ENCODE measurements at regions of chr11 and their contacts with region 1.

Region 1: DNA sequence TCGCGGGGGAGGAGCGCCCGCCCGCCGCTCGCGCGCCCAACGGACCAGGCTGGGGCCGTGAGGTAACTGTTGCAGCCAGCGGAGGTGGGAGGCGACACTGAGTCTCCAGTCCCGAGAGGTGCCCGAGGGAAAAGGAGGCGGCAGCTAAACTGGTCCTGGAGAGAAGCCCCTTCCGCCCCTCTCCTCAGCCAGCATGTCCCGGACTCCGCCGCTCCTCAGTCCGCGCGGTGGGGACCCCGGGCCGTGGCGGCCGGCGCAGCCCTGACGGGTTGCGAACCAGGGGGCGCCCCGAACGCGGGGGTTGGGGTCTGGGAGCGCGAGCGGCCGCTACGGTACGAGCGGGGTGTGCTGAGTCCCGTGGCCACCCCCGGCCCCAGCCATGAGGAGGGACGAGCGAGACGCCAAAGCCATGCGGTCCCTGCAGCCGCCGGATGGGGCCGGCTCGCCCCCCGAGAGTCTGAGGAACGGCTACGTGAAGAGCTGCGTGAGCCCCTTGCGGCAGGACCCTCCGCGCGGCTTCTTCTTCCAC is at the start of gene PDE3B:
- DNase-seq: peak; percentile 47 to 83 (median 68)
- ATAC-seq: peak; percentile 54 to 62
- H3K4me3 Mint-ChIP-seq: peak within 1 kb of the TSS; percentile 85 to 98 (median 90)
- H3K27ac Mint-ChIP-seq: peak within 1 kb of the TSS; percentile 85 to 98 (median 94)
- H3K4me1 Mint-ChIP-seq: peaks cover 24 to 47% (median 42%) of the 10 kb centered on the region in 4 donors
- H3K27me3 Mint-ChIP-seq: peaks cover 0 to 3% (median 0%) of the 10 kb centered on the region in 5 donors
- polyA plus RNA-seq, gene PDE3B: 59.2 to 127 (median 74.8) TPM

Region 2: GRCh38 chr11:14435717-14436512 is 207.8 kb before region 1 on chr11:
- POLR2A ChIA-PET with region 1: no interaction called
- DNase-seq: peak in 1 of 10 donors; percentile 15
- ATAC-seq: no peak
- H3K4me3 Mint-ChIP-seq: no peak overlapping the region
- H3K27ac Mint-ChIP-seq: peak overlapping the region in 2 of 10 donors; percentile 19 to 40
- H3K4me1 Mint-ChIP-seq: peaks cover 17 to 42% (median 28%) of the 10 kb centered on the region in 4 donors
- H3K27me3 Mint-ChIP-seq: no peaks in the 10 kb centered on the region

Region 3: GRCh38 chr11:14519917-14520746 is 123.6 kb before region 1 on chr11 and contains the start of gene PSMA1:
- POLR2A ChIA-PET with region 1: interaction called, 14 read pairs
- DNase-seq: peak; percentile 83 to 92 (median 88)
- ATAC-seq: peak; percentile 90 to 96
- H3K4me3 Mint-ChIP-seq: peak within 1 kb of the TSS; percentile 90 to 99 (median 96)
- H3K27ac Mint-ChIP-seq: peak within 1 kb of the TSS; percentile 92 to 98 (median 98)
- H3K4me1 Mint-ChIP-seq: peaks cover 11 to 38% (median 27%) of the 10 kb centered on the region in 4 donors
- H3K27me3 Mint-ChIP-seq: no peaks in the 10 kb centered on the region
- polyA plus RNA-seq, gene PSMA1: 154 to 159 (median 156) TPM

Region 4: GRCh38 chr11:14554959-14555358 is 88.8 kb before region 1 on chr11:
- POLR2A ChIA-PET with region 1: interaction called, 41 read pairs
- DNase-seq: peak in 8 of 10 donors; percentile 24 to 90 (median 74)
- ATAC-seq: peak; percentile 88 to 95
- H3K4me3 Mint-ChIP-seq: peak overlapping the region; percentile 10 to 77 (median 58)
- H3K27ac Mint-ChIP-seq: peak overlapping the region; percentile 88 to 98 (median 96)
- H3K4me1 Mint-ChIP-seq: peaks cover 35 to 49% (median 42%) of the 10 kb centered on the region in 4 donors
- H3K27me3 Mint-ChIP-seq: no peaks in the 10 kb centered on the region

Region 5: GRCh38 chr11:14619603-14620531 is 23.9 kb before region 1 on chr11:
- POLR2A ChIA-PET with region 1: interaction called, 44 read pairs
- DNase-seq: no peak
- ATAC-seq: no peak
- H3K4me3 Mint-ChIP-seq: peak overlapping the region in 2 of 10 donors; percentile 7 to 22
- H3K27ac Mint-ChIP-seq: peak overlapping the region in 7 of 10 donors; percentile 9 to 86 (median 60)
- H3K4me1 Mint-ChIP-seq: peaks cover 39 to 91% (median 79%) of the 10 kb centered on the region in 4 donors
- H3K27me3 Mint-ChIP-seq: no peaks in the 10 kb centered on the region

Region 6: GRCh38 chr11:14698771-14699170 is 55.0 kb after region 1 on chr11:
- POLR2A ChIA-PET with region 1: interaction called, 13 read pairs
- DNase-seq: peak in 2 of 10 donors; percentile 30 to 38
- ATAC-seq: peak; percentile 78 to 79
- H3K4me3 Mint-ChIP-seq: peak overlapping the region; percentile 36 to 84 (median 70)
- H3K27ac Mint-ChIP-seq: peak overlapping the region; percentile 72 to 92 (median 80)
- H3K4me1 Mint-ChIP-seq: peaks cover 22 to 64% (median 56%) of the 10 kb centered on the region in 4 donors
- H3K27me3 Mint-ChIP-seq: no peaks in the 10 kb centered on the region

Region 7: GRCh38 chr11:14892036-14892567 is 248.3 kb after region 1 on chr11 and contains the start of gene CYP2R1:
- POLR2A ChIA-PET with region 1: interaction called, 20 read pairs
- DNase-seq: peak; percentile 77 to 94 (median 88)
- ATAC-seq: peak; percentile 82 to 86
- H3K4me3 Mint-ChIP-seq: peak within 1 kb of the TSS; percentile 88 to 99 (median 96)
- H3K27ac Mint-ChIP-seq: peak within 1 kb of the TSS; percentile 86 to 99 (median 96)
- H3K4me1 Mint-ChIP-seq: peaks cover 25 to 46% (median 44%) of the 10 kb centered on the region in 4 donors
- H3K27me3 Mint-ChIP-seq: no peaks in the 10 kb centered on the region
- polyA plus RNA-seq, gene CYP2R1: 11.9 to 19.4 (median 16.3) TPM